Sciatic nerve (tissue), 2 donors: ENCODE measurements at regions of chr4 and their contacts with region 1.

Region 1: DNA sequence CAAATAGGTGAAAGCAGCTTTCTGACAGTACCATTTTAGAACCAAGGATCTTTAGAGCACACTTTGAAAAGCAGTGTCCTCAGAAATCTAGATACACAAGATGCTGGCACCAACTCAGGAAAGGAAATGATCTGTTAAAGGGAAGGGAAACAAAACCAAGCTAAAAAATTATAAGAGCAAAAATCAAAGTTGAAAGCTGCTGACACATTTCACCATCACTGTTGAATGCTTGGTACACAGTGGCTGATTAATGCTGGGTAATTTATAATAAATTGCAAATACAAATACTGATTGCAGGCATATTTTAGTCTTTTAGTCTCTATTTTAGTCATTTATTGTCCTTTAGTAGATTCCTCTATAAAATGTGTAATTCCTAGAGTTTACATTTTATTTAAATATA is 1540.1 kb upstream of the PCDH10 start:
- DNase-seq: no peak
- ATAC-seq: no peak

Region 2: DNA sequence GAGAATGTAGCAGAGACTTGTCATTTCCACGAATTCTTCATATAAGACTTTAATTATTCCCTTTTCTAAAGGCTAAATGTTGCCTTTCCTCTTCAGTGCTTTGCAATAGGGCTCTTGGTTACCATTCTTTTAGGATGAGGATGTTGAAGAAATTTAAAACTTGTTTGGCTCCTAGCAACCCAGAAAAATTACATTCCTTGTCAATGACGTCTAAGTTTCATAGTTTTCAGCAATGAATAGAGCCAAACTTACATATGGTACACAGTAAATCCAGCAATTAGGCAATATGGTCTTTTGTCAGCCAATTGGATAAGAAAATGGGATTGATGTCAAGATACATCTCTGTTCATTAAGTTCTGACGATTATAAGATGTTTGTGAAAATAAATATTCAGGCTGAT is 99.5 kb before region 1 on chr4:
- intact Hi-C with region 1: no loop called
- DNase-seq: no peak
- ATAC-seq: no peak

Region 3: GRCh38 chr4:131595140-131595539 is 13.9 kb before region 1 on chr4:
- intact Hi-C with region 1: loop called (anchors 1 kb)
- DNase-seq: no peak
- ATAC-seq: no peak

Region 4: DNA sequence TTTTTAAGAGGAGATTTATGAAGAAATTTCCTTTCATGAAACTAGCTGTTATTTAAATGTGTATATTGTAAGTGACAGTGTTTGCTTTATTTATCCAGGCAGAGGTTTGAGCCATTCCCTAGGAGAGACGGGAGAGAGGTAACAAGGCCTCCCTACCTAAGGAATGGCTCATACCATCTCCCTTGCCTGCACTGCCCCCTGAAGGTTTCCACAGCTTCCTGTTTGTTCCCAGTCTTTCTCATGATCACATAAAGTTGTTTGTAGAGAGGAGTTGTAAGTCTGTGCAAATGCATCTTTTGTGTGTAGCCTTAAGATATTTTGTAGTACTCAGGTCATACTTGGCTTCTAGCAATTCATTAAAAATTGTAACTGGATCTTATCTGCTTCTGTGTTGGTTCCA is 35.6 kb after region 1 on chr4:
- intact Hi-C with region 1: no loop called
- DNase-seq: no peak
- ATAC-seq: no peak